ENCODE measurements at regions of chr9 and their contacts with region 1.

Region 1: DNA sequence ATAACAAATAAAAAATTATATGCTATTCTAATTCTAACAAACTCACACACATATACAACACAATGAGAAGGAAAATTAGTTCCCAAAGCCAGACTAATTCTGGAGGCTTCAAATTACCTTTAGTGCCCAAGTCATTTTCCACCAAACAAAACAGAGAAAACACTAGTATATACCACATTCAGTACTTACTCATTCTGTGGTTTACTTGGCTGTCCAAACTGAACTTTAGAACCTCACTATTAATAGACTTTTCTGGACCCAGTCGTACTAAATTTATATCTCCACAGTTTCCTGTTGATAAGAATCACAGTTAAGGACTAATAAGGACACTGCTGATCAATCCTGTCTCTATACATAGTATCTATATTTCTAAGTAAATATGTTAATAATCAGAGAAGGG is 66.4 kb downstream of the SETX start:
- H3K4me3 Mint-ChIP-seq: no peak overlapping the region
- H3K27ac Mint-ChIP-seq: no peak overlapping the region
- H3K4me1 Mint-ChIP-seq: no peaks in the 10 kb centered on the region
- H3K27me3 Mint-ChIP-seq: no peaks in the 10 kb centered on the region

Region 2: GRCh38 chr9:132333556-132333955 is 45.2 kb after region 1 on chr9:
- intact Hi-C with region 1: loop called (anchors 5 kb)
- H3K4me3 Mint-ChIP-seq: no peak overlapping the region
- H3K27ac Mint-ChIP-seq: no peak overlapping the region
- H3K4me1 Mint-ChIP-seq: peaks cover 5% of the 10 kb centered on the region
- H3K27me3 Mint-ChIP-seq: no peaks in the 10 kb centered on the region

Region 3: GRCh38 chr9:132387133-132387532 is 98.8 kb after region 1 on chr9:
- intact Hi-C with region 1: loop called (anchors 5 kb)
- H3K4me3 Mint-ChIP-seq: no peak overlapping the region
- H3K27ac Mint-ChIP-seq: no peak overlapping the region
- H3K4me1 Mint-ChIP-seq: peaks cover 18% of the 10 kb centered on the region
- H3K27me3 Mint-ChIP-seq: no peaks in the 10 kb centered on the region

Measured in dendritic cell treated with granulocyte-macrophage colony-stimulating factor and Interleukin-4, amounts not matched to agents 40 ng/mL and 50 ng/mL, for 4 days (primary cell).